Activated T-helper 2 cell treated with anti-CD3 and anti-CD28 coated beads, Interferon-gamma antibody, Interleukin-2, Interleukin-4, amounts not matched to agents 10 μg/mL and 5 μg/mL and 100 μg/mL, durations not matched to agents 14 hours and 24 hours and 36 hours (primary cell): ENCODE measurements at regions of chr7 and their contacts with region 1.

Region 1: GRCh38 chr7:51067757-51068156 is 248.9 kb downstream of the COBL start:
- DNase-seq: no peak
- H3K4me3 Mint-ChIP-seq: no peak overlapping the region
- H3K27ac Mint-ChIP-seq: no peak overlapping the region
- H3K4me1 Mint-ChIP-seq: no peaks in the 10 kb centered on the region
- H3K27me3 Mint-ChIP-seq: peaks cover 2% of the 10 kb centered on the region

Region 2: DNA sequence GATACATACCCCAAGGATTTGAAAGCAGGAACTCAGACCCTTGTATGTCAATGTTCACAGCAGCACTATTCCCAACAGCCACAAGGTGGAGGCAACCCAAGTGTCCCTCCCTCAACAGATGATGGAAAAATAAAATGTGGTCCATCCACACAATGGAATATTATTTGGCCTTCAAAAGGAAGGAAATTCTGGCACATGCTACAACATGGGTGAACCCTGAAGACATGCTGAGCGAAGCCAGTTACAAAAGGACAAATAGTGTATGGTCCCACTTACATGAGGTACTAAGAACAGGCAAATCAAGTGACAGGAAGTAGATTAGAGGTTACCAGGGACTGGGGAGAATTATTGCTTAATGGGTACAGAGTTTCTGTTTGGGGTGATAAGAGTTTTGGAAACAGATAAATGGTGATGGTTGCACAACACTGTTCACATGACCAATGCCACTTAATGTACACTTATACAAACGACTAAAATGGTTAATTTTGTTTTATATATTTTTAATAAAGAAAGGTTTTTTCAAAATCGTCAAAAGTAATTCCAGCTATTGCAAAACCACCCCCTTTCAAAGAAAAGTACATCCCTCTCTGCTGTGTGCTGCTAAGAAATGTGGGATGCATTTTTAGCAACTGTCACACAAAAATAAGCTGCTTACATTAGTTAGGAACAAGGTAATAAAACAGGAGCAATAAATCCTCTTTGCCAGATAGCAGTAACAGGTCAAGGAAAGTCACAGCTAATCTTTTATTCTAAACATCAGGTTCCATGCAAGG is 370.8 kb before region 1 on chr7:
- intact Hi-C with region 1: loop called (anchors 5 kb)
- DNase-seq: no peak
- H3K4me3 Mint-ChIP-seq: no peak overlapping the region
- H3K27ac Mint-ChIP-seq: no peak overlapping the region
- H3K4me1 Mint-ChIP-seq: peaks cover 8% of the 10 kb centered on the region
- H3K27me3 Mint-ChIP-seq: peaks cover 13% of the 10 kb centered on the region

Region 3: GRCh38 chr7:50782384-50783208 is 285.2 kb before region 1 on chr7 and contains the start of gene GRB10:
- intact Hi-C with region 1: loop called (anchors 5 kb)
- DNase-seq: no peak
- H3K4me3 Mint-ChIP-seq: peak within 1 kb of the TSS; percentile 63
- H3K27ac Mint-ChIP-seq: no peak within 1 kb of the TSS
- H3K4me1 Mint-ChIP-seq: peaks cover 15% of the 10 kb centered on the region
- H3K27me3 Mint-ChIP-seq: peaks cover 41% of the 10 kb centered on the region
- total RNA-seq, gene GRB10: 2.3 and 2.4 TPM in 2 replicates

Region 4: DNA sequence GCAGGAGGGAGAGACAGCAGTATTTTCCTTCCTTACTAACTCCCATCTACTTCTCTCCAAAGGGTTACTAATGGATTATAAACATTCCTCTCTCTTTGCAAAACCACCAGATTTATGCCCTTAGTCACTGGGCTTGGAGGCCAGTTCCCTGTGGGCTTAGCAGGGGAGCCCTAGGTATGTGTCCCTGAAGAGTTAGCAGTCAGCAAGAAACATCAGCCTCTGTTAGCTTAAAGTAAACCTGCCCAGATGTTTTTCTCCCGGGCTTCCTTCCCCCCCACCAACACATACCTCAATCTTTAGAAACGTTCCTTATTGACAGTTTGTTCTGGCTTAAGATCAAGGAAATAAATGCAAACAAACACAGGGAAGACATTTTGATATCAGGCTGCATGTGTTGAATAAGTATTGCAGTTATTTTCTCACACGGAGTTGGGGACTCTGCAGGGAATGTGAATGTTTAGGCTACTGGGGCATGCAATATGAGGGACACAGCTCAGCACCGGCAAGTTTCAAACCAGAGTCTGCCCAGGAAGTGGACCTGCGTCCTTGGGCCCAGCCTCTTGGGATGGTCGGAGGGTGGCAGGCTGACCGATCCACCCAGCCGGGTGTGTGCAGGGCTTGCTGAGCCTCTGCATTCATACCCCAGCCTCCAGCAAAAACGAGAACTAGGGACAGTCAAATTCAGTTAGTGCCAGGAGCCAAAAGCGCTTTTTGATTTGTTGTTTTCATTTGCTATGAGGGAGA is 33.1 kb before region 1 on chr7:
- intact Hi-C with region 1: no loop called
- DNase-seq: no peak
- H3K4me3 Mint-ChIP-seq: no peak overlapping the region
- H3K27ac Mint-ChIP-seq: no peak overlapping the region
- H3K4me1 Mint-ChIP-seq: no peaks in the 10 kb centered on the region
- H3K27me3 Mint-ChIP-seq: peaks cover 5% of the 10 kb centered on the region

Region 5: DNA sequence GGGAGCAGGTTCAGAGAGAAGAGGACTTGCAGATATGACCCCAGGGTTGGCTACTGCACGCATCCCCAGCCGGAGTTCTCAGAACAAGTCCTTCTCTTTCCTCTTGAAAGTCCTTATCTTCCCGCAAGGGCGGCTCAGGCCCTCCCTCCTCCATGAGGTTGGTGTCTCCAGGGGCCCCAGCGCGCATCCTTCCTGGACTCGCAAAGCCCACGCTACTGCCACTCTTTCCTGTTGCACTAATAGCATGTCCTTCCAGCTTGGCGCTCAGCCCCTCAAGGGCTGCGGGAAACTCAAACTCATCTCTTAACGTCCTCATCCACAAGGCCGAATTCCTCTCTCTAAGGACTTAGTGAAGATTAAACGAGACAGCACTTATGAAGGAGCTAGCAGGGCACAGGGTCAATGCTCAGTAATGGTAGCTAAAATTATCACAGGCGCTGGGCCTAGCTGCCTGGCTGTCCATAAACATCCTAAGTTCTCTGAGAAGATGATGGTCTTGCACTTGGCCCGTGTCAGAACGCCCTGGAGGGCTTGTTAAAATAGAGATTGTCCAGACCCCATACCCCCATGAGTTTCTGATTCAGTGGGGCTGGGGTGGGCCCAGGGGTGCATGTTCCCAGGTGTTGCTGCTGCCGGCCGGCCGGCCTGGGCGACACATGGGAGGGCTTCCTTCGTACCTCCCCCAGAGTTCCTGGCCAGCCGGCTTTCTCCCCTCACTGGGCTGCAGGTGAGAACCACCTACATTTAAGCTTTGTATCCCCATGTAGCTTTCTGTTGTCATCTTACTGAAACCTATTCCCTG is 12.5 kb before region 1 on chr7:
- intact Hi-C with region 1: no loop called
- DNase-seq: no peak
- H3K4me3 Mint-ChIP-seq: no peak overlapping the region
- H3K27ac Mint-ChIP-seq: no peak overlapping the region
- H3K4me1 Mint-ChIP-seq: no peaks in the 10 kb centered on the region
- H3K27me3 Mint-ChIP-seq: peaks cover 6% of the 10 kb centered on the region

Region 6: GRCh38 chr7:51141451-51142003 is 73.8 kb after region 1 on chr7:
- intact Hi-C with region 1: loop called (anchors 2 kb)
- DNase-seq: no peak
- H3K4me3 Mint-ChIP-seq: no peak overlapping the region
- H3K27ac Mint-ChIP-seq: no peak overlapping the region
- H3K4me1 Mint-ChIP-seq: peaks cover 23% of the 10 kb centered on the region
- H3K27me3 Mint-ChIP-seq: peaks cover 11% of the 10 kb centered on the region